Upper lobe of right lung (tissue), 1 donor: ENCODE measurements at regions of chr2 and their contacts with region 1.

Region 1: GRCh38 chr2:216222650-216223352 is 113.7 kb downstream of the XRCC5 start:
- DNase-seq: no peak
- ATAC-seq: no peak
- H3K4me3 ChIP-seq: no peak overlapping the region
- H3K27ac ChIP-seq: no peak overlapping the region
- H3K4me1 ChIP-seq: peaks cover 2% of the 10 kb centered on the region
- H3K27me3 ChIP-seq: no peaks in the 10 kb centered on the region
- CTCF ChIP-seq: peak; percentile 9

Region 2: DNA sequence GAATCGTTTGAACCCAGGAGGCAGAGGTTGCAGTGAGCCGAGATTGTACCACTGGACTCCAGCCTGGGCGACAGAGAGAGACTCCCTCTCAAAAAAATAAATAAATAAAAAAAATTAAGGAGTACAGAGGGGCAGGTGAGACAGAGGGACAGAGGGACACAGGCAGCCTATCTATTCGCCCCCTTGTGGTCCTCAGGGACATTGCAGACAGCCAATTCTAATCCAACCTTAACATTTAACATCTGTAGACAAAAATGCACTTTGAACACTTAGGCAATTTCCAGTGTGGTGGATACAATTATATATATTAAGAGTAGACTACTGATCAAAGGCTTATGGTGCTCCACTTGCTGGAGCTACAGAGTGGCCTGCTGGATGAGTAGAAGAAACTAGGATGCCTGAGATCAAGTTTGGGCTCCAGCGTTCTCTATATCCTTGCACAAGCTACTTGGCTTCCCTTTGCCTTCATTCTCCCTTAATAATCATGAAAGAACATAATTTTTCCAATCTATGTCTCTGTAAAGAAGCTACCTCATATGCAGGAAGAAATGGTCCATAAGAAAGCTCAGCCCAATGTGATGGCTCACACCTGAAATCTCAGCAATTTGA is 181.3 kb after region 1 on chr2:
- intact Hi-C with region 1: loop called (anchors 10 kb)
- DNase-seq: no peak
- ATAC-seq: peak; percentile 85
- H3K4me3 ChIP-seq: no peak overlapping the region
- H3K27ac ChIP-seq: no peak overlapping the region
- H3K4me1 ChIP-seq: no peaks in the 10 kb centered on the region
- H3K27me3 ChIP-seq: no peaks in the 10 kb centered on the region
- CTCF ChIP-seq: peak; percentile 92